Left cardiac atrium (tissue), 4 donors: ENCODE measurements at regions of chrX and their contacts with region 1.

Region 1: DNA sequence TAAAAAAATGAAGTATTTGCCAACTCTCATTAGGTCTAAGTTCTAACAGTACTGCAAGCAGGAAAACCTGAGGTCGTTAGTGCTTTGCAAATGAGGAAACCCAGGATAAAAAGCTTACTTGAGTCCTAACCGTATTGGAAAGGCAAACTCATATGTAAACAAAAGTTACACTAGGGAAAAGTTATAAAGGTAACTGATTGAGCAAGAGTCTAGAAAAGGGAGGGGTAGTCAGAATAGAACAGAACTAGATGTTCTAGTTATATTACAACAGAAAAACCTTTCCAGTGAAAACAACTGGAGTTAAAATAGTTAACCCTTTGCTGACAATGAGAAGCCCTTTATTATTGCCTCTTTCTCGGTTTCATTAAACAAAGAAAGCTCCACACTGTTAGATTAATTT is 66.4 kb upstream of the MAOA start:
- DNase-seq: no peak
- ATAC-seq: peak; percentile 34 to 67

Region 2: GRCh38 chrX:43540318-43540717 is 49.4 kb before region 1 on chrX:
- intact Hi-C with region 1: no loop called
- DNase-seq: no peak
- ATAC-seq: no peak

Region 3: GRCh38 chrX:43644124-43644701 is 54.5 kb after region 1 on chrX:
- intact Hi-C with region 1: loop called in 1 of 2 experiments (anchors 10 kb)
- DNase-seq: no peak
- ATAC-seq: peak in 1 of 2 donors; percentile 76